ENCODE measurements at regions of chr15 and their contacts with region 1.

Region 1: DNA sequence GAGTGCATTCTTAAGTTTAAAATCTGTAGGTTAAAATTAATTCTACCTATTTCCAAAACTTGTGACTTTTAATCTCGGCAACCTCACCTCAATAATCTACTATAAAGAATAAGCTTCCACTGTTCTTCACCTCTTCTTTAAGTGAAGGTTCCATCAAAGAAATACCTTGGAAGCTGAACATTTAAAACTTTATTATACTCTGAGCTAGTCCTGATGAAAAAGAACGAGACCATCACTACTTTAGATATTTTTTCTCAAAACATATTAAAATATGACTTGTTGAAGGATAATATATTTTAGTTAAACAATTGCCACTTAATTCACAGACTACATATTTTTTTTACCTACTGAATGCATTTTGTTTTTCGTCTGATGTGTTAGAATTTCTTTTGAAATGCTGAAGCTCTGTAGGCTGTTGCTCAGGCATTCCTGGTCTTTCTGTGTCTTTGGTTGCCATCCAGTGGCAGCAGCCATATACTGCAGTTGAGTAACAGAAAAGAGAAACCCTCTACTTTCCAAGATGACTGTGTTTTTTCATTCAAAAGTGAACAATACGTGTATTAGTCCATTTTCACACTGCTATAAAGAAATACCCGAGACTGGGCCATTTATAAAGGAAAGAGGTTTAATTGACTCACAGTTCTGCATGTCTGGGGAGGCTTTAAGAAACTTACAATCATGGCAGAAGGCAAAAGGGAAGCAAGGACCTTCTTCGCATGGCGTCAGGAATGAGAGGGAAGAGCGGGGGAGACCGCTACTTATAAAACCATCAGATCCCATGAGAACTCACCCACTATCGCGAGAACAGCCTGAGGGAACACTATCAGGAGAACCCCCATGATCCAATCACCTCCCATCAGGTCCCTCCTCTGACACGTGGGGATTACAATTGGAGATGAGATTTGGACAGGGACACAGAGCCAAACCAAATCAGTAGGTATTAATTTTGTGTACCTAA is 4.5 kb upstream of the GOLGA8B start:
- DNase-seq: peak; percentile 80
- ATAC-seq: peak; percentile 79
- H3K4me3 ChIP-seq: peak overlapping the region; percentile 32; the same call in 1 of the 2 replicates
- H3K27ac ChIP-seq: no peak overlapping the region
- H3K4me1 ChIP-seq: peaks cover 3% of the 10 kb centered on the region; the same call in 1 of the 2 replicates
- H3K27me3 ChIP-seq: peaks cover 4% of the 10 kb centered on the region
- CTCF ChIP-seq: peak; percentile 89
- POLR2A ChIP-seq: peak; percentile 90
- RAD21 ChIP-seq: peak; percentile 92

Region 2: GRCh38 chr15:34065941-34066340 is 522.1 kb before region 1 on chr15:
- CTCF ChIA-PET with region 1: interaction called, 3 read pairs
- POLR2A ChIA-PET with region 1: no interaction called
- dilution Hi-C with region 1: no loop called
- in situ Hi-C with region 1: no loop called
- intact Hi-C with region 1: loop called (anchors 5 kb)
- DNase-seq: no peak
- ATAC-seq: no peak
- H3K4me3 ChIP-seq: no peak overlapping the region
- H3K27ac ChIP-seq: no peak overlapping the region
- H3K4me1 ChIP-seq: no peaks in the 10 kb centered on the region
- H3K27me3 ChIP-seq: no peaks in the 10 kb centered on the region
- CTCF ChIP-seq: no peak
- POLR2A ChIP-seq: no peak
- RAD21 ChIP-seq: no peak

Region 3: GRCh38 chr15:34109797-34110663 is 478.0 kb before region 1 on chr15:
- CTCF ChIA-PET with region 1: interaction called, 4 read pairs
- POLR2A ChIA-PET with region 1: no interaction called
- dilution Hi-C with region 1: no loop called
- in situ Hi-C with region 1: loop called (anchors 25 kb)
- intact Hi-C with region 1: loop called (anchors 2 kb)
- DNase-seq: peak; percentile 60
- ATAC-seq: peak; percentile 86
- H3K4me3 ChIP-seq: no peak overlapping the region
- H3K27ac ChIP-seq: no peak overlapping the region
- H3K4me1 ChIP-seq: no peaks in the 10 kb centered on the region; the same call in 1 of the 2 replicates
- H3K27me3 ChIP-seq: no peaks in the 10 kb centered on the region
- CTCF ChIP-seq: peak; percentile 85
- POLR2A ChIP-seq: no peak
- RAD21 ChIP-seq: peak; percentile 88

Region 4: DNA sequence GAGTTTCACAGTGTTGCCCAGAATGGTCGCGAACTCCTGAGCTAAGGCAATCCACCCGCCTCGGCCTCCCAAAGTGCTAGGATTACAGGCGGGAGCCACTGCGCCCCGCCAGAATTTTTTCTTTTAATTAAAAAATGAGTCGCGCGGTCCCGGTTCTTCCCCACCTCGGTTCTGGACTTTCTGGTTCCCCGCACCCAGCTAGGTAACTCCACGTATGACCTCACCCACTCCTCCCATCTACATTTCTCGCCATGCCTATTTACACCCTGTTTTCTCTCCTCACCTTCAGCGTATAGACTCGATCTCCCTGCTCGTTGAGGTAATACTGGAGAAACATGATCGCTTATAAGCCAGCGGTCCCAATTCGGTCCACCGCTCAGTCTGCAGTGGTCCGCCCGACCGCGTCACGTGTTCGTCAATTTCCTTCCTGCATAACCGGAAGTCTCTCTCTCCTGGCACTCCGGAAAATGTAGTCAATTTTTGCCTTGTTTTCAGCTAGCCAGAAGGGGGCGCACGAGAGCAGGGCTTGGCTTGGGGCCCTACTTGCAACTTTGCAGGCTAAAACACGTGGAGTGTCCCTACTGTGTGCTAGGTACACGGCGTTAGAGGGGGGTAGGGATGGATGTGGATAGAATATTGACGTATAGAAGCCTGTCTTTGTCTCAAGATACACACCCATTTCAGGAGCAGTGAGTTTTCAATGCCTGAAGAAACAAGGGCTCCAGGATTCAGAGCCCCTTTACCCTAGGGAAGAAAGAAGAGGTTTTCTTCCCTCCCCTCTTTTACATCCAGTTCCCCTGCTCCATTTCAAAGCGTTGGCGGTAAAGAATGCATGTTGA is 245.0 kb before region 1 on chr15 and contains the starts of genes NOP10 and NUTM1:
- CTCF ChIA-PET with region 1: interaction called, 4 read pairs
- POLR2A ChIA-PET with region 1: interaction called, 16 read pairs
- dilution Hi-C with region 1: no loop called
- in situ Hi-C with region 1: loop called (anchors 5 kb)
- intact Hi-C with region 1: loop called (anchors 1 kb)
- DNase-seq: peak; percentile 93
- ATAC-seq: peak; percentile 84
- H3K4me3 ChIP-seq: peak within 1 kb of the TSS; percentile 90
- H3K27ac ChIP-seq: peak within 1 kb of the TSS; percentile 90
- H3K4me1 ChIP-seq: peaks cover 3% of the 10 kb centered on the region; the same call in 1 of the 2 replicates
- H3K27me3 ChIP-seq: no peaks in the 10 kb centered on the region
- CTCF ChIP-seq: peak; percentile 96
- POLR2A ChIP-seq: peak; percentile 75
- RAD21 ChIP-seq: peak; percentile 69
- total RNA-seq, gene NOP10: 141 and 211 TPM in 2 replicates
- total RNA-seq, gene NUTM1: not detected in 2 replicates

Region 5: GRCh38 chr15:34358367-34358766 is 229.6 kb before region 1 on chr15:
- CTCF ChIA-PET with region 1: no interaction called
- POLR2A ChIA-PET with region 1: no interaction called
- dilution Hi-C with region 1: no loop called
- in situ Hi-C with region 1: no loop called
- intact Hi-C with region 1: loop called (anchors 5 kb)
- DNase-seq: no peak
- ATAC-seq: no peak
- H3K4me3 ChIP-seq: no peak overlapping the region
- H3K27ac ChIP-seq: no peak overlapping the region
- H3K4me1 ChIP-seq: no peaks in the 10 kb centered on the region
- H3K27me3 ChIP-seq: no peaks in the 10 kb centered on the region
- CTCF ChIP-seq: peak; percentile 18; the same call in 1 of the 2 replicates
- POLR2A ChIP-seq: no peak
- RAD21 ChIP-seq: no peak

Region 6: DNA sequence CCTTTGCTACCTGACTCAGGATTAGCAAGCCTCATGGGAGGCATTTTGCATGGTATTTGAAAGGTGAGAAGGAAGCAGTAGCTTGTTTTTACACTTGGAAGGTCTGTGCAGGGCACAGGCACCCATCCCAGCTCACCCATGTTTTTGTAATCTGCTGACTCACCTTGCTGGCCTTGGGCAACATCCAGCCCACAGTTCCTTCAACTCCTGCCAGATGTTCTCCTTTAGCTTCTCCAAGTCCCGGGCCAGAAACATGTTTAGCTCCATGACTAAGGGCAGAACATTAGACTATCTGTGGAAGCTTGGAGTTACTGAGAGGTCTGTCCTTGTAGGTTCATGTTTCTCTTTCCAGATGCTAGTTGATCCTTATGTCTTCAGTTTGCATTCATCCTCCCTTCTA is 412.5 kb after region 1 on chr15:
- CTCF ChIA-PET with region 1: no interaction called
- POLR2A ChIA-PET with region 1: no interaction called
- dilution Hi-C with region 1: no loop called
- in situ Hi-C with region 1: no loop called
- intact Hi-C with region 1: no loop called
- DNase-seq: peak; percentile 79
- ATAC-seq: peak; percentile 79
- H3K4me3 ChIP-seq: no peak overlapping the region
- H3K27ac ChIP-seq: no peak overlapping the region
- H3K4me1 ChIP-seq: peaks cover 2% of the 10 kb centered on the region; the same call in 1 of the 2 replicates
- H3K27me3 ChIP-seq: no peaks in the 10 kb centered on the region; the same call in 1 of the 2 replicates
- CTCF ChIP-seq: no peak
- POLR2A ChIP-seq: no peak
- RAD21 ChIP-seq: no peak